T47D (cell line): ENCODE measurements at regions of chr20 and their contacts with region 1.

Region 1: DNA sequence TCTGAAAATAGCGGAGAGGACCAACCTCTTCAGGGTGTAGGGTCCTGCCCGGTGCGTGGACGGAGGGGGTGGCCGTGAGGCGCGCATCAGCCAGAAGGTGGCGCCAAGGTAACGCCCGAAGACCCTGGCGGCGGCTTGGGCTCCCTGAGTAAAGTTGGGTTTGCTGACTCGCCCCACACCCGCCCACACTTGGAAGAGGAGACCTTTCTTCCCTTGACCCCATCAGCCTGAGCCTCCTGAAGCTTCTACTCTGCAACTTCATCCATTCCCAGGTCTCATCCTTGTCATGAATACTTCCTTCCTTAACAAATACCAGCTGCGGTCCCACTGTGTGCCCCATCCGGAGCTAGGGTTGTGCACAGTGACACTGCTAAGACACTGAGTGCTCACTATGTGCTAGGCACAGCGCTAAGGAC is 14.6 kb downstream of the CD40 start:
- DNase-seq: peak; percentile 61 to 71

Region 2: DNA sequence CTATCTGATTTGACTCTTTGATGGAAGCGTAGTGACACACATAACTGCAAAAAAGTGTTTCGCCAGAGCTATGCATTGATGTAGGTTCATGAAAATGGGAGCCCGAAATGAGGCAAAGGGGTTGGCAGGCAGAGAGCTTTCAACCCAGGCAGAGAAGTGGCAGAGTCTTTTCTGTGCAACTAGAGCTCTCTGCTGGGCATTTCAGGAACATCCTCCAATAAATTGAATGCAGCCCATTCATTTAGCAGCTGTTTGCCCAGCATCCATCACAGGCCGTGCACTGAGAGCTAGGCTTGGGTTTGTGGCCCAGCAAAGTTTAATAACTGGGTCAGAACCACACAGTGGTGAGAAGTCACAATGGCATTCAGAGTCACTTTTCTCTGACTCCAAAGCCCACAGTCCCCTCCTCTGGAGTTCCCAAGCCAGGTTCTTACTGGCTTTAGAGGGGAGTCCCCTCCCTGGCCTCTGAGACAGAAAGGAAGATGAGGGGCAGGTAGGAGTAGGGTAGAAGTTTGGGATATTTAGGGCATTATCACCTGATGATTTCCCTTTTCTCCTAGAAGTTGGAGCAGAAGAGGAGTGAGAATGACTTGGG is 305.5 kb after region 1 on chr20:
- in situ Hi-C with region 1: loop called (anchors 25 kb)
- DNase-seq: peak; percentile 83